Head of caudate nucleus (tissue), 42 donors: ENCODE measurements at regions of chr19 and their contacts with region 1.

Region 1: DNA sequence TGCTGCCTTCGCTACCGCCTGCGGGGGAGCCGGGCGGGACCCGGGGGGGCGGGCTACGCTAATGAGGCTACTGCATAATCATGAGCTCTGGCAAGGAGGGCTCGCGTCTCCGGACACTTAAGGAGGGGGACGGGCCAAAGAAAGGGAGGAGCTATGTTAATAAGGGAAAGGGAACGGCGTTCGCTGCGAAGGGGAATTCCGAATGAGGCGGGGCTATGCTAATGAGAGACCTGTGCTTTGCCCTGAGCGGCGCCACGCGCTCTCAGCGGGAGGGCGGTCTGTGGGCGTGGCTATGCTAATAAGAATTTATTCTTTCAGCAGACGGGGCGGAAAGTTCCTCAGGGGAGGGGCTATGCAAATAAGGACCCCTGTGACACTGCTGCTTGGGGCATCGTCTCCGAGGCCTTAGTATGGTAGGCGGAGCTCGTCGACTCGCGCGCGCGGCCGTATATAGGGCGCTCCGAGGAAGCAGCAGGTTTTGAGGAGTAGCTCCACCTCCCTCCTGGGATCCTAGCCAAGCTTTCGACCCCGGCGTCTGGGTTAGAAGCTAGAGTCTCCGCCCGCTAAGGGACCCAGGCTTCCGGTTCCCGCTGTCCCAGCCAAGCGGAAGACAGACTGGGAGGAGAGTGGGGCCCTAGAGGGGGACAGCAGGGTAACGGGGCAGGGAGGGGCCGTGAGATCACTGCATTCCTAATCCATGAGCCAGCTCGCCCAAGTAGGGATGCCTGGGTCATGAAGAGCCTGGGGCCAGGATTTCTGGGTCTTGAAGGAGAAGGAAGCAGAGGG is at the start of gene RRAS:
- DNase-seq: peak; percentile 96 to 100 (median 100)

Region 2: GRCh38 chr19:49590071-49590970 is 50.0 kb before region 1 on chr19:
- intact Hi-C with region 1: loop called (anchors 5 kb)
- DNase-seq: peak; percentile 77 to 98 (median 92)

Region 3: DNA sequence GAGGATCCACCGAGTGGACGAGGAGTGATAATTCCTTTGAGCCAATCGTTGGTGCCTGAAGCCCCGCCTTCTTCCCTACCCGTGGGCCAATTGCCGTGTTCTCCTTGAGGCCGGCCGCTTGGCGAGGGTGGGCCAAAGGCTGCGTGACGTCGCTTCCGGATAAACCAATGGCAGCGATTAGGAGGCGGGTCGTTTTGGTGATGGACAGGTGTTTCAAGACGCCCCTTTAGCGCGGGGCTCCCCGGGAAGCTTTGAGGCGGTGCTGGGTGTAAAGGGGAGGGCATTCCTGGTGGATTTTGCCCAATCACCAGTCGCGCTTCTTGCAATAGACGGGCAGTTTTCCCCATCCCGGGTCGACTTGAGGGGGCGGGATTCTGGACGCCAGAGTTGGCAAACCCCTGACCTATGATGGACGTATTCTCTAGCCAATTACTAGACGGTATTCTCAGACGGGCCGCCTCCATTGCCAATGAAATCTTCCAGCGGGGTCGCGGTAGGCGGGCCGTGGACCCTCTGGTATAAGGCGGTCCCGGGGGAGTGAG is 36.5 kb after region 1 on chr19:
- intact Hi-C with region 1: loop called (anchors 2 kb)
- DNase-seq: peak; percentile 99 to 100 (median 100)